Dorsolateral prefrontal cortex (tissue), 120 donors: ENCODE measurements at regions of chrX and their contacts with region 1.

Region 1: DNA sequence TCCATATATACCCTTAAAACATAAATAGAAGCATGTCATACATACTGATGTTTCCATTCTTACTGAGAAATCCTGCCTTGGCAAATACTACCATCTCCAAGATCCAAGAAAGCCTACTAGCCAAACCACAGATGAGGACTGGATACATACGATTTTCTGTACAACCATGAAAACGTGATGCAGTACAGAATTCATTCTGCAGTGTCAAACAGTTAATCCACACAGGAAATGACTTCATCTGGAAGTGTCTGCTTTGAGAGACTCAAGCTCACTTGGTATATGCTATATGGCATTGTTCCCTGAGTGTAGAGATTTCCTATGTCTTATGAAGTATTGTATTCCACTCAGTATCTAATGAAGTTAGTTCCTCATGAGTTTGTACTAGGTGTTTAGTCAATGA is 94.3 kb downstream of the CT47B1 start:
- DNase-seq: no peak
- H3K4me3 ChIP-seq: no peak overlapping the region
- H3K27ac ChIP-seq: no peak overlapping the region
- H3K27me3 ChIP-seq: peaks cover 0 to 65% (median 15%) of the 10 kb centered on the region in 45 donors
- CTCF ChIP-seq: no peak

Region 2: DNA sequence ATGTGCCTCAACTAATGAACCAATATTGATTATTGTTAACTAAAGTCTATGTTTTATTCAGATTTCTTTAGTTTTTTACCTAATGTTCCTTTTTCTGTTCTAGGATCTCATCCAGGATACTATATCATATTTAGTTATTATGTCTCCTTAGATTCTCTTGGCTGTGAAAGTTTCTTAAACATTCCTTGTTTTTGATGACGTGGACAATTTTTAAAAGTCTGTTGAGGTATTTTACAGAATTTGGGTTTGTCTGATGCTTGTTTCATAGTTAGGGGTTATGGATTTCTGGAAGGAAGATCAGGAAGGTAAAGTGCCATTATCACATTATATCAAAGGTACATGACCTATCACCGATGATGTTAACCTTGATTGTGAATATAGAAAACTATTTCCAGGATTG is 195.7 kb before region 1 on chrX:
- intact Hi-C with region 1: no loop called
- DNase-seq: no peak
- H3K4me3 ChIP-seq: no peak overlapping the region
- H3K27ac ChIP-seq: no peak overlapping the region
- H3K27me3 ChIP-seq: peaks cover 0 to 24% (median 0%) of the 10 kb centered on the region in 45 donors
- CTCF ChIP-seq: no peak

Region 3: GRCh38 chrX:121581862-121582261 is 800.5 kb after region 1 on chrX:
- intact Hi-C with region 1: loop called in 1 of 2 experiments (anchors 10 kb)
- DNase-seq: no peak
- H3K4me3 ChIP-seq: no peak overlapping the region
- H3K27ac ChIP-seq: no peak overlapping the region
- H3K27me3 ChIP-seq: peaks cover 0 to 48% (median 3%) of the 10 kb centered on the region in 45 donors
- CTCF ChIP-seq: no peak